Activated CD4-positive, alpha-beta memory T cell treated with anti-CD3 and anti-CD28 coated beads, Interleukin-2, amount 10 ng/mL, durations not matched to agents 7 days and 5 days (primary cell): ENCODE measurements at regions of chr17 and their contacts with region 1.

Region 1: DNA sequence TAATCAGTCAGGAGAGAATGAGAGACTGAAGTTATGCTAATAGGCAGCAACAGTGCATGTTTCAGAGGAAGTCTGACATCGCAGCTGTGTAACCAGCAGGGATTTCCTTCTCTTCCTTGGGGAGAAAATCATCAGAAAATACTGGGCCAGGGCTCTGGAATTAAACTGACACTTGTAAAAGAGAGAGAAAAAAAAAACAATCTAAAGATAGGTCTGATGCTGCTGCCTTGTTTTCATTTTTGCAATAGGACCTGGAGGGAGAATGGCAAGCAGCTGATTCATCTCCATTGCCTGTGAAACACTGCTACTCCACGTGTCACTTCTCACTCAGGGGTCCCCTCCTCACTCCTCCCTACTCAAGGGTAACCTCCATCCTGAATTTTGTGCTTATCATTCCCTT is 17.7 kb upstream of the CORO6 start:
- DNase-seq: no peak
- H3K4me3 Mint-ChIP-seq: no peak overlapping the region
- H3K27ac Mint-ChIP-seq: no peak overlapping the region
- H3K4me1 Mint-ChIP-seq: peaks cover 19% of the 10 kb centered on the region
- H3K27me3 Mint-ChIP-seq: no peaks in the 10 kb centered on the region

Region 2: DNA sequence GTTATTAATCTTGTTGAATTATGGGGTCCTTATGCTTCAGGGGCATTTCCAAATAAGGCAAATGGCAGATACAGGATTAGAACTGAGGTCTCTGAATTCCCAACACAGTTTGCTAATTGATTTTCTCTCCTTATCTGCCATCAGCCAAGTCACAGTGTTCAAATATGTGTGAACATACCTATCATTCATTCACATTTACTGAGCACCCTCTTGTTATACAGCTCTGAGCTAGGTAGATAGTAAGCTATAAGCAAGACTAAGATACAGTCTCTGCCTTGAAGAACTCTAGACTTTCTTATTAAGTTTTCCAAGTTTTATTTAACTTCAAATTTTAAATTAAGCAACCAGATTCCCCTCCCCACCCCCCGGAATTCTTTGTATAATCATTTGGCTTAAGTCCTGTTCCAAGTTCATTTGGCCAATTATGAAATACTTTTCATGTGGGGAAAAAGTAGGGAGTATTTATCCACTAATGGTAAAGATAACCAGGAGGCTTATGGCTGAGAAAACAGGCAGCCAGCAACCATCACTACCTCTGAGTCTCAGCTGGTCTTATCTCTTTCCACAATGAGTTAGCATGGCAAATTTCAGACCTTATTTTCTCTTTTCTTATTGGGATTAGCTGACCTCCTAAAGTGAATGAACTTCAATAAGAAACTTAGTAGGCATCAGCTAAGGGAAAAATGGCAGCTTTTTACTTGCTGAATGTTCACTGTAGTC is 13.7 kb after region 1 on chr17:
- CTCF ChIA-PET with region 1: interaction called, 13 read pairs
- POLR2A ChIA-PET with region 1: interaction called, 4 read pairs
- DNase-seq: no peak
- H3K4me3 Mint-ChIP-seq: no peak overlapping the region
- H3K27ac Mint-ChIP-seq: no peak overlapping the region
- H3K4me1 Mint-ChIP-seq: peaks cover 2% of the 10 kb centered on the region
- H3K27me3 Mint-ChIP-seq: no peaks in the 10 kb centered on the region

Region 3: DNA sequence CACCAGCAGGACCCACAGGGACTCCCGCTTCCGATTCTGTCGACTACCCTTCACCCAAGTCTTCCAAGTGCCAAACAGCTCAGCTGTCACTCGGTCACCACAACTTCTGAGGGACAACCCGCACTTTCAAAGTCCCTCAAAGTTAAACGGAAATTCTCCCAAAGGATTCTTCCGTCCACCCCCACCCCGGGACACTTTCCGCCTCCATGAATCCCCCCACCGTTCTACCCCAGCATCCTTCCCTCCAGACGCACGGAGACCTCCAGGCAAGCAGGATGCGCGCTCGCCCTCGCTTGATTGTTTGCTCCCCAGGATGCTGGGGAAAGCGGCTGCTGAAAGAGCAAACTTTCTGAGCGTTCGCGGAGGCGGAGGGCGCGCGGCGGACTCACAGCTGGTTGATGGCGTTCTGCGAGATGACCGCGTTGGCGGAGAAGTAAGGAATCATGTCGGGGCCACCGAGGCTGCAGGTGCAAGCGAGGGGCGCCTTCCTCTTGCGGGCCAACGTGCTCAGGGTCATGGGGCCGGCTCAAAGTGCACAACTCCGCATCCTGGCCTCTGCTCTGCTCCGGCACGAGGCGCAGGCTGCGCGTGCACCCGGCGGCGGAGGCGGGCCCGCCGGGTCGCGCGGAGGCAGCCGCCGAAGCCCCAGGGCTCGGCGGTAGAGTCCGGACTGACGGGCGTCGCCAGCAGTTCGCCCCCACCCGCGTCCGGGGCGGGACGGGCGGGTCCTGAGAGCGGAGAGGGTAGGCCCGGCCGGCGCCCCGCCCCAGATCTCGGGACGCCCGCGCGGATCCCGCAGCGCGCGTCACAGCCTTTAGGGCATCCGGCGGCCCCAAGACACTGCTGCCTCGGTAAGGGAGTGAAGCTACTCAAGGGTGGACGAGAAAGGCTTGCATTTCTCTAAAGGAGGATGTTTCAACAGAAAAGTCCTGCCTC is 120.6 kb after region 1 on chr17:
- CTCF ChIA-PET with region 1: interaction called, 19 read pairs
- POLR2A ChIA-PET with region 1: interaction called, 11 read pairs
- DNase-seq: peak; percentile 95
- H3K4me3 Mint-ChIP-seq: peak overlapping the region; percentile 91
- H3K27ac Mint-ChIP-seq: peak overlapping the region; percentile 95
- H3K4me1 Mint-ChIP-seq: peaks cover 42% of the 10 kb centered on the region
- H3K27me3 Mint-ChIP-seq: no peaks in the 10 kb centered on the region

Region 4: GRCh38 chr17:29782917-29783316 is 142.5 kb after region 1 on chr17:
- CTCF ChIA-PET with region 1: interaction called, 114 read pairs
- POLR2A ChIA-PET with region 1: interaction called, 19 read pairs
- DNase-seq: no peak
- H3K4me3 Mint-ChIP-seq: no peak overlapping the region
- H3K27ac Mint-ChIP-seq: no peak overlapping the region
- H3K4me1 Mint-ChIP-seq: peaks cover 11% of the 10 kb centered on the region
- H3K27me3 Mint-ChIP-seq: no peaks in the 10 kb centered on the region

Region 5: DNA sequence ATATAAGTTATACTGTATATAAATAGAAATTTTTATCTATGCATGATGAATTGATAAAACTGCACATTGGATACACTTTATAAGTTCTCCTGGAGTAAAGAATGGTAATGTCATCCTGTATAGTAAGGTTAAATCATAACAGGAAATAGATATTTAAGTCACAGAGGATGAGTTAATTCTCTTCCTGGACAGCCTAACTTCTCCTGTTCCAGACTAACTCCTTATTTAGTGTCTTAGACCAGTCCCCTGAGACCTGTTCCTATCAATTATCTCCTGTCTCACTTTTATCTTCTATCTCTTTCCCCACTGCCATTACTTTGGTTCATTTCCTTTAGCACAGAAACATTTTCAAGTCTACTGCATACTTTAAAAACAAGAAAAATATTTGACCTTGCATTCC is 243.1 kb after region 1 on chr17:
- CTCF ChIA-PET with region 1: no interaction called
- POLR2A ChIA-PET with region 1: no interaction called
- DNase-seq: no peak
- H3K4me3 Mint-ChIP-seq: no peak overlapping the region
- H3K27ac Mint-ChIP-seq: no peak overlapping the region
- H3K4me1 Mint-ChIP-seq: peaks cover 15% of the 10 kb centered on the region
- H3K27me3 Mint-ChIP-seq: no peaks in the 10 kb centered on the region